Gastrocnemius medialis (tissue), 4 donors: ENCODE measurements at regions of chr18 and their contacts with region 1.

Region 1: DNA sequence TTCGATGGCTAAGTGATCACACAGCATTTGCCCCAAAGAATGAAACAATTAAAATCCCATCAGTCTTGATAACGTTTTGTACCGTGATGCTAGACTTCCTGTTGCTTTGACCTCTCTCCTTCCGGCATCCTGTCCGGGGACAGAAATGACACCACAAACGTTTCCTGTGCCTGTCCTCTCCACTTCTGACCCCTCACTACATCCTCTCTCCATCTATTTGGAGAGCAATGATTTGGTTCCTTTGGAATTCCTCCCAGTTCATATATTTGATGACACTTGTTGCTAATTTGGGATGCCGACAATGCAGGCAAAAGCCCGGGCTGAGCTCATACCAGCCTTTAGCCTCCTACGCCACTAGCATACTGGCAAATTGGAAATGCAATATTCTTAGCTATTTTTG is 151.2 kb upstream of the CCDC68 start:
- DNase-seq: peak in 1 of 2 donors; percentile 13
- ATAC-seq: peak; percentile 78 to 83
- H3K4me3 ChIP-seq: no peak overlapping the region
- H3K27ac ChIP-seq: peak overlapping the region; percentile 62 to 74 (median 70)
- H3K4me1 ChIP-seq: peaks cover 3 to 7% of the 10 kb centered on the region in 2 donors
- H3K27me3 ChIP-seq: no peaks in the 10 kb centered on the region
- CTCF ChIP-seq: no peak
- POLR2A ChIP-seq: no peak

Region 2: GRCh38 chr18:55096261-55096951 is 14.0 kb before region 1 on chr18:
- in situ Hi-C with region 1: no loop called
- intact Hi-C with region 1: no loop called
- DNase-seq: no peak
- ATAC-seq: peak in 1 of 2 donors; percentile 66
- H3K4me3 ChIP-seq: no peak overlapping the region
- H3K27ac ChIP-seq: no peak overlapping the region
- H3K4me1 ChIP-seq: no peaks in the 10 kb centered on the region
- H3K27me3 ChIP-seq: no peaks in the 10 kb centered on the region
- CTCF ChIP-seq: peak in 4 of 5 experiments; percentile 6 to 38 (median 18)
- POLR2A ChIP-seq: no peak

Region 3: DNA sequence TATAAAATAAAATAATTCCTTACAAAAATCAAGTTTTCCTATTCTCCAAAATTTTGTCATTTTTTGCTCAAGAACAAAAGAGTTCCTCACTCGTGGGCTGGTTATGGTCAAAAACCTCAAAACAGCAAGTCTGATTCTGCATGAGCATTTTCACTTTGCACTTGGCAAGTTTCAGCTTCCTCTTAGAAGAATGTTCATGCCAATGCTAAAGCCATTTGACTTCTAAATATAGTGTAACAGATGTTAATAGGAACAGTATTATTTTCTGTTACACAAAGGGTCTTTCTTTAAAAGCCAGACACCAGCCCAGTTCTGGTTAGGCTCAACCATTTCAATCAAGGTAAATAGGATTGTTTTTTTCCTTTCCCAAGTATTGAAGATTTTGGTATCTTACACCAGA is 110.1 kb after region 1 on chr18:
- in situ Hi-C with region 1: no loop called
- intact Hi-C with region 1: loop called (anchors 10 kb)
- DNase-seq: no peak
- ATAC-seq: peak in 1 of 2 donors; percentile 41
- H3K4me3 ChIP-seq: no peak overlapping the region
- H3K27ac ChIP-seq: peak overlapping the region in 1 of 4 donors; percentile 24
- H3K4me1 ChIP-seq: peaks cover 0 to 4% of the 10 kb centered on the region in 2 donors
- H3K27me3 ChIP-seq: no peaks in the 10 kb centered on the region
- CTCF ChIP-seq: no peak
- POLR2A ChIP-seq: no peak

Region 4: DNA sequence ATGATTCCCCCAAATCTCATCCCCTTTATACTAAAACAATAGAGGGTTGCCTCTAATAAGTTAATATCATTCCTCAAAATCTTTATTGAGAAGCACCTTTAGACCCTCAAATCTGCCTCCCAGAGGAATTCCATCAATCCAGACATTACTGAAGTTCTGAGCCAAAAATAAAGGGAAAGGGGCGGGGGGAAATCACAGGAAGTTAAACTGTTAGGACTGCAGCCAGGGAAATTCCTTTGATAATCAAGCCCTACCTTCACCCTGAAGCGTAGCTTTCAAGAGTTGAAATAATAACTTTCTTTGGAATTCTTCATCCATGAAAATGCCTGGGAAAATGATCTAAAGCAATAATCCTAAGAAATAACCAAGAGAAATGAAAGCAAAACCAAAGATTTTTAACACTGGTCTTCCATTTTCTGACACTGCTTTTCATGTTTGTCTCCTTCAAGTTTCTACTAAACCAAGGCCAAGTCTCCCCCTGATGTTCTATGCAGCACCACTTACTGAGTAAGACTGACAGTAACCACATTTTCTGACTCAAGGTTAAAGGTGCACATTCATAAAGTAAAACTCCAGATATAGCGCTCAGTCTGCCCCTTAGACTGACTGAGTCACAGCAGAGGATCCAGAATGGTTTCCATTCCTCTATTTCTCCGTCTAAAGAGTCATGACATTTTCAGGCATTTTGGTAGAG is 399.3 kb after region 1 on chr18:
- in situ Hi-C with region 1: no loop called
- intact Hi-C with region 1: loop called (anchors 10 kb)
- DNase-seq: no peak
- ATAC-seq: peak; percentile 10 to 49
- H3K4me3 ChIP-seq: peak overlapping the region; percentile 12 to 39 (median 19)
- H3K27ac ChIP-seq: peak overlapping the region; percentile 67 to 80 (median 78)
- H3K4me1 ChIP-seq: peaks cover 0 to 33% of the 10 kb centered on the region in 2 donors
- H3K27me3 ChIP-seq: no peaks in the 10 kb centered on the region
- CTCF ChIP-seq: no peak
- POLR2A ChIP-seq: peak in 1 of 2 donors; percentile 39